ENCODE measurements at regions of chr1 and their contacts with region 1.

Region 1: GRCh38 chr1:26391450-26391849 is 18.9 kb upstream of the ZNF683 start:
- DNase-seq: peak; percentile 64
- ATAC-seq: peak; percentile 75
- H3K4me3 ChIP-seq: no peak overlapping the region
- H3K27ac ChIP-seq: no peak overlapping the region
- H3K4me1 ChIP-seq: peaks cover 17 to 23% of the 10 kb centered on the region in 2 experiments
- H3K27me3 ChIP-seq: peaks cover 14% of the 10 kb centered on the region; the same call in 1 of the 2 replicates
- CTCF ChIP-seq: peak; percentile 90 to 92 (median 91)
- POLR2A ChIP-seq: no peak
- RAD21 ChIP-seq: peak; percentile 99

Region 2: GRCh38 chr1:26102526-26102925 is 288.9 kb before region 1 on chr1:
- CTCF ChIA-PET with region 1: interaction called, 3 read pairs
- POLR2A ChIA-PET with region 1: no interaction called
- RAD21 ChIA-PET with region 1: no interaction called
- intact Hi-C with region 1: loop called (anchors 1 kb)
- DNase-seq: no peak
- ATAC-seq: no peak
- H3K4me3 ChIP-seq: no peak overlapping the region
- H3K27ac ChIP-seq: no peak overlapping the region
- H3K4me1 ChIP-seq: 0 out of 4 replicates have a peak, but pooled peaks cover 0 to 3% of the 10 kb centered on the region in 2 experiments
- H3K27me3 ChIP-seq: no peaks in the 10 kb centered on the region
- CTCF ChIP-seq: no peak
- POLR2A ChIP-seq: no peak
- RAD21 ChIP-seq: no peak

Region 3: DNA sequence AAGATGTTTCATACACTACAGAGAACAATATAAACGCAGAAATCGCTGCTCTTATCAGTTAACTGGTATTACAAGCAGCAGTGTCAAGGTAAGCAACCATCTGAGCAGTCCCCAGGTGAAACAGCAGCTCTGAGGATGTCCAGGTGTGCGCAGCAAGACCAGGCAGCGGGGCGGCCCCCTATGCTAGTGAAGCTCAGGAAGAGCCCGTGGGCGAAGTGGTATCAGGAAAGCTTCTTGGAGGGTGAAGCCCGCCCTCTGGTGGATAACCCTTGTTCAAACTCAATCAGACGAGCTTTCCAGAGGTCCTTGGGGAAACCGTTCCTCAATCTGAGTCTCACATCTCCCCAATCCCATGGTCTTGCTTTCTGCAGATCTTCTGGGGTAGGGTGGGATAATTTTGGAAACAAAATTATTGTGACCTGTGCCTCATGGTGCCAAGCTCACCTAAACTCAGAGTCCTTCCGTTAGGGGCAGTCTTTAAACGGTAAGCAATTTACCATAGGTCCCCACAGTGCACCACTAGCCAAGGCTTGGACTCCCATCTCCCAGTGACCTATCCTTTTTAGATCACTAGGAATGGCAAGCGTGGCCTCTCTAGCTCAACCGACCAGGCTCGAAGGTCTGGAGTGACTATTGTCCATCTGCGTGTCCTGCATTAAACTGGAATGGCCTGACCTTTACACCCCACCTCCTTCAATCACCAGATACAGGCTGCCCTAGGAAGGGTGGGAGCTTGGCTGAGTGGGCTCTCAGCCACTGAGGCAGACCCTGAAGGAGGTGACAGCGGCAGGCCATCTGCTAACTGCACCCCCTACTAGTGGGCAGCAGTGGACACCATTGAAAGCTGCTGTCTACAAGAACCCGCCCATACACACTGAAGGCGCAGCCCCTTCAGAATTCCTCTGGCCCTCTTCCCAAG is 246.2 kb before region 1 on chr1:
- CTCF ChIA-PET with region 1: interaction called, 18 read pairs
- POLR2A ChIA-PET with region 1: no interaction called
- RAD21 ChIA-PET with region 1: interaction called in 1 of 2 experiments, 3 read pairs
- intact Hi-C with region 1: loop called (anchors 1 kb)
- DNase-seq: peak; percentile 89
- ATAC-seq: peak; percentile 93
- H3K4me3 ChIP-seq: no peak overlapping the region
- H3K27ac ChIP-seq: no peak overlapping the region
- H3K4me1 ChIP-seq: peaks cover 14 to 28% of the 10 kb centered on the region in 2 experiments
- H3K27me3 ChIP-seq: no peaks in the 10 kb centered on the region
- CTCF ChIP-seq: peak; percentile 71 to 95 (median 72)
- POLR2A ChIP-seq: no peak
- RAD21 ChIP-seq: peak; percentile 97

Region 4: GRCh38 chr1:26279456-26280332 is 111.8 kb before region 1 on chr1 and contains the start of gene SH3BGRL3:
- CTCF ChIA-PET with region 1: interaction called, 34 read pairs
- POLR2A ChIA-PET with region 1: no interaction called
- RAD21 ChIA-PET with region 1: interaction called, 5 to 11 read pairs
- intact Hi-C with region 1: loop called (anchors 1 kb)
- DNase-seq: peak; percentile 57
- ATAC-seq: peak; percentile 79
- H3K4me3 ChIP-seq: peak within 1 kb of the TSS; percentile 74 to 76
- H3K27ac ChIP-seq: peak within 1 kb of the TSS; percentile 81
- H3K4me1 ChIP-seq: peaks cover 41 to 95% of the 10 kb centered on the region in 2 experiments
- H3K27me3 ChIP-seq: no peaks in the 10 kb centered on the region
- CTCF ChIP-seq: peak in 2 of 3 experiments; percentile 70 to 77; a peak in 4 of 6 replicates
- POLR2A ChIP-seq: peak; percentile 68
- RAD21 ChIP-seq: no peak
- total RNA-seq, gene SH3BGRL3: 112 TPM

Region 5: DNA sequence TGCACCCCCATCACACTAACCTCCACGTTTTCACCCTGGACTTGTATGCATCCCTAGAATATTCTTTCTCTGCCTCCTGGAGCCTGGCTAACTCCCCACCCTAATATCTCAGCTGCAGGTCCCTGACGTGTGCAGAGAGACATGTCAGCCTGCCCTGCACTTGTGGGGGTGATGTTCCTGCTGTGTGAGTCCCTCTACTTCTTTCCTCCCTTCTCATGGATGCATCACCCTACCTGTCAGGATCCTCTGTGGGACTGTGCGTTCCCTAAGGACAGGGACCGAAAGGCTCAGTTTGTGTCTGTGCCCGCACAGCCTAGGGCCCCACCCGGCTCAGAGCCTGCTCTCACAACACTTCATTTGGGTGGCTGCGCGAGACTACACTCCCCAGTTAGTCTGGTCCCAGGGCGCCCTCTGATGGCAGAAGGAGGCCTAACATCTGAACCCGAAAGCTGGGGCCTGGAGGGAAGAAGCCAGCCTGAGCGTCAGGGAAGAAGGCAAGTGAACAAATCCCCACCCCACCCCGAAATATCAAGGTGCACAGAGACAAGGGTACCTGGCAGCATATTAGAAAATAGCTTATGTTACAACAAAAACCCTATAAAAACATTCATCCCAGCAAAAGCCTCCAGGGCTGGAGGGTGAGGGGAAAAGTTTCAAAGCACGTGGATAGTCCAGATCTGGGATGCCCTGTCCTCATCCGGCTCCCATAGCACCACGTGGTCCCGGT is 70.0 kb before region 1 on chr1:
- CTCF ChIA-PET with region 1: interaction called, 9 read pairs
- POLR2A ChIA-PET with region 1: no interaction called
- RAD21 ChIA-PET with region 1: no interaction called
- intact Hi-C with region 1: loop called (anchors 1 kb)
- DNase-seq: peak; percentile 54
- ATAC-seq: peak; percentile 97
- H3K4me3 ChIP-seq: no peak overlapping the region
- H3K27ac ChIP-seq: no peak overlapping the region
- H3K4me1 ChIP-seq: peaks cover 5 to 16% of the 10 kb centered on the region in 2 experiments; a peak in 3 of 4 replicates
- H3K27me3 ChIP-seq: no peaks in the 10 kb centered on the region
- CTCF ChIP-seq: peak; percentile 83 to 93 (median 92)
- POLR2A ChIP-seq: no peak
- RAD21 ChIP-seq: peak; percentile 97

Region 6: GRCh38 chr1:26516987-26517765 is 125.7 kb after region 1 on chr1:
- CTCF ChIA-PET with region 1: no interaction called
- POLR2A ChIA-PET with region 1: no interaction called
- RAD21 ChIA-PET with region 1: no interaction called
- intact Hi-C with region 1: no loop called
- DNase-seq: no peak
- ATAC-seq: no peak
- H3K4me3 ChIP-seq: no peak overlapping the region
- H3K27ac ChIP-seq: no peak overlapping the region
- H3K4me1 ChIP-seq: no peaks in the 10 kb centered on the region
- H3K27me3 ChIP-seq: no peaks in the 10 kb centered on the region
- CTCF ChIP-seq: no peak
- POLR2A ChIP-seq: no peak
- RAD21 ChIP-seq: no peak

Measured in HCT116 (cell line).